Calu3 (cell line): ENCODE measurements at regions of chr6 and their contacts with region 1.

Region 1: DNA sequence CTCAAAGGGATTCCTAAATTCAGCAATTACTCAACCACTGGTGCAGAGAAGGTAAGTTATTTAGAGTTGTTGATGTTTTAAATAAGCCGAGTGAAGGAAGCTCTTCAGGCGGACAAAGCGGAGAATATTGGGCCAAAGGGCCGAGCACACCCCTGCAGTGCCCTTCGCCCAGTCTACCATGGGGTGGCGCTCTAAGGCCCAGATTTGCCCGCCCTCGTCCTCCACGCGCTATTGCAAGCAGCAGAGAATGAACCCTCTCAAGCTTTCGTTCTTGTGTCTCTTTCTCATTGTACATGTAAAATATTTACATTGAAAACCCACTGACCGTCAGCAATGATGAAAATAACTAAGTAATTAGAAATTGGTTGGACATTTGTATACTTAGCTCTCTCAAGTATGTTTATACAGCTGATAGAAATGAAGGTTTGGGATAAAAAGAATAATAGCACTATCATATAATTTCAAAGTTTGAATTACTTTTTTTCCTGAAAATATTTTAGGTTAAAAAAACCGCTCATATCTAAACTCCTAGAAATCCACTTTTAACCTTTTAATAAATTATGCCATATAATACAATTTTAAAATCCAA is 195.0 kb upstream of the CEP162 start:
- DNase-seq: peak; percentile 84
- H3K4me3 Mint-ChIP-seq: no peak overlapping the region
- H3K27ac Mint-ChIP-seq: no peak overlapping the region
- H3K4me1 Mint-ChIP-seq: peaks cover 8% of the 10 kb centered on the region
- H3K27me3 Mint-ChIP-seq: no peaks in the 10 kb centered on the region
- CTCF ChIP-seq: peak; percentile 89

Region 2: GRCh38 chr6:84546427-84546914 is 124.0 kb after region 1 on chr6:
- CTCF ChIA-PET with region 1: interaction called, 3 read pairs
- intact Hi-C with region 1: loop called (anchors 5 kb)
- DNase-seq: peak; percentile 5
- H3K4me3 Mint-ChIP-seq: no peak overlapping the region
- H3K27ac Mint-ChIP-seq: no peak overlapping the region
- H3K4me1 Mint-ChIP-seq: peaks cover 20% of the 10 kb centered on the region
- H3K27me3 Mint-ChIP-seq: peaks cover 15% of the 10 kb centered on the region
- CTCF ChIP-seq: no peak

Region 3: DNA sequence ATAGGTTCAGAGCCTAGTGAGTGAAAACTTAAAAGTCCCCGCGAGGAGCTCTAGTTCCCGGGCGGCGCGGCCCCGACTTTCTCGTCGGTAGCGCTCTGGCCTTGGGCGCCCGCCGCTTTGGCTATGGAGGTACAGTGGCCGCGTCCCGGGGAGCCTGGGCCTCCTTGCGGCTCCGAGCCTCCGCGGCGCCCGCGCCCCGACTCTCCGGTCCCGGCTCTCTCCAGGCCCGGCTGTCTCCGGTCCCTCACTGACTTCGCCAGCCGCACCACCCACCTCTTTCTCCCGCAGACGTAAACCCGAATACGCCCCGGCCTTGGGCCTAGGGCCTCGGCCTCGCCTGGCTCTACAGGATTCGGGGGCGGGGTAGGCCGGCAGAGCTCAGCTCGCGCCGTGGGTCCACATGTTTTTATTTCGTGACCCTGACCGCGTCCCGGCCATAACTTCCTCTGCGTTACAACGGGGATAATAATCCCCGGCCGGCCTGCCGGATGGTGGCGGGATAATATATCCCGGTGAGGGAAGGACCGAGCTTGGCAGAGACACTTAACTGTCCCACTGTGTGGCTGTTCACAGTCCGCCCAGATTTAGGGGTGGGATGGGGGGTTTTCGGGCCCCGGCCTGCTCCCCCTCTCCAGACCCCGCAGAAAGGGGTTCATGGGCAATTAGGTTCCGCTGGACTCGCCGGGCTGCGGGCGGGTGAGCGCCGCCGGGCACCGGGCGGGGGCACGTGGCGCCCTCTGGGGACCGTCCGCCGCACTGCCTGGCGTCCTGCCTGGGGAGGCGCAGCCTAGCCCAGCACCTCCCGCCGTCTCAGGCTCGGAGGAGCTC is 351.9 kb after region 1 on chr6:
- CTCF ChIA-PET with region 1: interaction called, 11 read pairs
- intact Hi-C with region 1: loop called (anchors 2 kb)
- DNase-seq: peak; percentile 93
- H3K4me3 Mint-ChIP-seq: peak overlapping the region; percentile 98
- H3K27ac Mint-ChIP-seq: peak overlapping the region; percentile 93
- H3K4me1 Mint-ChIP-seq: peaks cover 14% of the 10 kb centered on the region
- H3K27me3 Mint-ChIP-seq: no peaks in the 10 kb centered on the region
- CTCF ChIP-seq: peak; percentile 82